CD4-positive, alpha-beta memory T cell (primary cell): ENCODE measurements at regions of chr2 and their contacts with region 1.

Region 1: GRCh38 chr2:3575534-3576262 is 638 bp downstream of the RPS7 start:
- DNase-seq: peak; percentile 19 to 56 (median 49)
- H3K4me3 ChIP-seq: peak overlapping the region; percentile 65 to 67
- H3K4me3 Mint-ChIP-seq: peak overlapping the region; percentile 87 to 98 (median 92)
- H3K27ac ChIP-seq: peak overlapping the region; percentile 94
- H3K27ac Mint-ChIP-seq: peak overlapping the region; percentile 87 to 99 (median 97)
- H3K4me1 ChIP-seq: peaks cover 46% of the 10 kb centered on the region
- H3K4me1 Mint-ChIP-seq: peaks cover 33 to 49% (median 38%) of the 10 kb centered on the region in 4 donors
- H3K27me3 ChIP-seq: no peaks in the 10 kb centered on the region
- H3K27me3 Mint-ChIP-seq: no peaks in the 10 kb centered on the region

Region 2: GRCh38 chr2:3558205-3559014 is 17.3 kb before region 1 on chr2 and contains the start of gene RNASEH1:
- CTCF ChIA-PET with region 1: interaction called, 8 read pairs
- POLR2A ChIA-PET with region 1: interaction called, 78 read pairs
- intact Hi-C with region 1: loop called (anchors 1 kb)
- DNase-seq: peak; percentile 96 to 98 (median 96)
- H3K4me3 ChIP-seq: peak within 1 kb of the TSS; percentile 18 to 87
- H3K4me3 Mint-ChIP-seq: peak within 1 kb of the TSS; percentile 89 to 95 (median 91)
- H3K27ac ChIP-seq: peak within 1 kb of the TSS; percentile 90
- H3K27ac Mint-ChIP-seq: peak within 1 kb of the TSS; percentile 93 to 98 (median 97)
- H3K4me1 ChIP-seq: peaks cover 25% of the 10 kb centered on the region
- H3K4me1 Mint-ChIP-seq: peaks cover 4 to 34% (median 24%) of the 10 kb centered on the region in 4 donors
- H3K27me3 ChIP-seq: no peaks in the 10 kb centered on the region
- H3K27me3 Mint-ChIP-seq: no peaks in the 10 kb centered on the region
- total RNA-seq, gene RNASEH1: 22.0 to 24.0 TPM

Region 3: DNA sequence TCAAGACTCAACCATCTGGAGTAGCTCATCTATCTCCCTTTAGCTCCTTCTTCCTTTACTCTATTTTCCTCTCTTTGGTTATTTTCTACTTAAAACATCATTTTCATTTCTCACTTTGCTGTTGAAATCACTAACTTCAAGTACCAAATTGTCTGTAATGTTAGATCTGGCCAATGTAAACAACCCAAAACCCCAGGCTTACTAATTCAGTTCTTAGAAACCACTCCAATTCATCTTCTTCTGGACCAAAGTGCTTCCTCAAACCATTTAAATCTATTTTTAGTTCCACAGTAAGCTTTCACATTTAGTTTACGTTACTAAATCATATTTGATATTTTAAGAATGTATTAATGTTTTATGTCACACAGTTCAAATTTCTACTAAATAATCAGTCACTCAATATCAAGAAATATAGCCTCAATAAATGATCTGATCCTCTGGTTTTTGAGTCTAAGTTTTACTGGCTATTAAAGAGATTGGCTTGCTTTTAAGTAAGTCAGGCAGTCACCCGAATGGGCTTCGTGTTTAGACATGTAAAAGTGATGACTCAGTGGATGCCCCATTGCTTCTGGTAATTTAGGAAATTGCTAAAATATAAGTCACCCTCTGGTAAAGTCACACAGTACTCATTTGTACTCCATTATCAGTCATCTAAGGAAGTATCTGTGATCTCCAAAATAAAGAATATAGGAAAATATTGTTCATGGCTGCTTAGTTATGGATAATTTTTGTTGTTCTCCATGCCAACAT is 1589.3 kb after region 1 on chr2:
- CTCF ChIA-PET with region 1: no interaction called
- POLR2A ChIA-PET with region 1: no interaction called
- intact Hi-C with region 1: no loop called
- DNase-seq: no peak
- H3K4me3 ChIP-seq: no peak overlapping the region
- H3K4me3 Mint-ChIP-seq: no peak overlapping the region
- H3K27ac ChIP-seq: no peak overlapping the region
- H3K27ac Mint-ChIP-seq: no peak overlapping the region
- H3K4me1 ChIP-seq: no peaks in the 10 kb centered on the region
- H3K4me1 Mint-ChIP-seq: no peaks in the 10 kb centered on the region
- H3K27me3 ChIP-seq: no peaks in the 10 kb centered on the region
- H3K27me3 Mint-ChIP-seq: no peaks in the 10 kb centered on the region